ENCODE measurements at regions of chr17 and their contacts with region 1.

Region 1: GRCh38 chr17:1800240-1800639 is 29.5 kb downstream of the SMYD4 start:
- DNase-seq: peak; percentile 35 to 46
- ATAC-seq: peak; percentile 62 to 89 (median 76)
- H3K4me3 ChIP-seq: no peak overlapping the region
- H3K27ac ChIP-seq: peak overlapping the region in 8 of 10 donors; percentile 18 to 67 (median 52)
- H3K4me1 ChIP-seq: peaks cover 0 to 40% (median 23%) of the 10 kb centered on the region in 9 donors
- H3K27me3 ChIP-seq: no peaks in the 10 kb centered on the region
- CTCF ChIP-seq: peak in 2 of 9 donors; percentile 4 to 12

Region 2: GRCh38 chr17:1820528-1821252 is 20.4 kb after region 1 on chr17:
- intact Hi-C with region 1: loop called in 1 of 10 experiments (anchors 1 kb)
- DNase-seq: no peak
- ATAC-seq: no peak
- H3K4me3 ChIP-seq: no peak overlapping the region
- H3K27ac ChIP-seq: no peak overlapping the region
- H3K4me1 ChIP-seq: peaks cover 0 to 11% (median 0%) of the 10 kb centered on the region in 9 donors
- H3K27me3 ChIP-seq: no peaks in the 10 kb centered on the region
- CTCF ChIP-seq: no peak

Region 3: GRCh38 chr17:1847191-1847590 is 47.0 kb after region 1 on chr17:
- intact Hi-C with region 1: loop called in 4 of 10 experiments (anchors 5 to 10 kb)
- DNase-seq: peak; percentile 51 to 64
- ATAC-seq: peak; percentile 81 to 99 (median 93)
- H3K4me3 ChIP-seq: no peak overlapping the region
- H3K27ac ChIP-seq: peak overlapping the region; percentile 0 to 67 (median 46)
- H3K4me1 ChIP-seq: peaks cover 0 to 26% (median 10%) of the 10 kb centered on the region in 9 donors
- H3K27me3 ChIP-seq: no peaks in the 10 kb centered on the region
- CTCF ChIP-seq: no peak

Measured in heart right ventricle (tissue), 16 donors.